Activated CD4-positive, alpha-beta T cell treated with anti-CD3 and anti-CD28 coated beads for 36 hours (primary cell): ENCODE measurements at regions of chr4 and their contacts with region 1.

Region 1: DNA sequence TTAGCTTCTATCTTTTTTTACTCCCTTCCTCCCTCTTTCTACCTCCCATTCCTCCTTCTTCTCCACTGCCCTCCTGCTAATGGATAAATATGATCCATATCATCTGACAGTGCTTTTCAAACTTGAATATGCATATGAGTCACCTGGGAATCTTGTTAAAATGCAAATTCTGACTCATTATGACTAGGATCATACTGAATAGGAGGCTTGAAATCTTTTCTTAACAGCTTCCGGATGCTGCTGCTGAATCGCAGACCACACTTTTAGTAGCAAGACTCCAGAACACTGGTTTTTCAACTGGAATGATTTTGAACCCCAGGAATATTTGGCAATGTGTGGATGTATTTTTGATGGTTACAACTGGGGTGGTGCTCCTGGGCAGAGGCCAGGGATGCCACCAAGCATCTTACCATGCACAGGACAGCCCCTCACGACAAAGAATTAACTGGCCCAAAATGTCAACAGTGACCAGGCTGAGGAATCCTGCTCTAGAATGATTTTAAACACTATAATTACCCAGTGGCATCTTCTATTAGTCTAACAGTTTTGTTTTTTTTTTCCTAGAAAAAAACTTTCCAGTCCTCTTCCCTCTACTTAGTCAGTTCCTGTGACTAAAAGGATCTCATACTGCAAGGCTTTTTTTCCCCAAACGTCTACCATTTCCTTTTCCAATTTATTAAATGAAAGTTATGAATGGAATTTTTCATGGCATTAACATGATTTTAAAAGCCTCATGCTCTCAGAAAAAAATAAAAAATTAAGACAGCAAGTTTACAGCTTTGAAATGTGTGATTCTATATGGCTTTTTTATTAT is 10.6 kb upstream of the PYURF start:
- DNase-seq: no peak
- ATAC-seq: no peak
- H3K4me3 Mint-ChIP-seq: no peak overlapping the region
- H3K27ac Mint-ChIP-seq: no peak overlapping the region
- H3K4me1 Mint-ChIP-seq: peaks cover 23% of the 10 kb centered on the region
- H3K27me3 Mint-ChIP-seq: no peaks in the 10 kb centered on the region

Region 2: GRCh38 chr4:88465653-88466192 is 68.4 kb before region 1 on chr4:
- CTCF ChIA-PET with region 1: no interaction called
- POLR2A ChIA-PET with region 1: no interaction called
- intact Hi-C with region 1: no loop called
- DNase-seq: no peak
- ATAC-seq: no peak
- H3K4me3 Mint-ChIP-seq: no peak overlapping the region
- H3K27ac Mint-ChIP-seq: no peak overlapping the region
- H3K4me1 Mint-ChIP-seq: peaks cover 16% of the 10 kb centered on the region
- H3K27me3 Mint-ChIP-seq: no peaks in the 10 kb centered on the region

Region 3: GRCh38 chr4:88659055-88659889 is 125.1 kb after region 1 on chr4:
- CTCF ChIA-PET with region 1: interaction called, 20 read pairs
- POLR2A ChIA-PET with region 1: no interaction called
- intact Hi-C with region 1: loop called (anchors 1 kb)
- DNase-seq: peak; percentile 54
- ATAC-seq: peak; percentile 81
- H3K4me3 Mint-ChIP-seq: no peak overlapping the region
- H3K27ac Mint-ChIP-seq: no peak overlapping the region
- H3K4me1 Mint-ChIP-seq: peaks cover 7% of the 10 kb centered on the region
- H3K27me3 Mint-ChIP-seq: no peaks in the 10 kb centered on the region

Region 4: GRCh38 chr4:88792268-88792781 is 258.2 kb after region 1 on chr4:
- CTCF ChIA-PET with region 1: interaction called, 4 read pairs
- POLR2A ChIA-PET with region 1: no interaction called
- intact Hi-C with region 1: loop called in 1 of 2 experiments (anchors 2 kb)
- DNase-seq: no peak
- ATAC-seq: peak; percentile 88
- H3K4me3 Mint-ChIP-seq: no peak overlapping the region
- H3K27ac Mint-ChIP-seq: no peak overlapping the region
- H3K4me1 Mint-ChIP-seq: peaks cover 18% of the 10 kb centered on the region
- H3K27me3 Mint-ChIP-seq: no peaks in the 10 kb centered on the region

Region 5: GRCh38 chr4:89024051-89024675 is 490.0 kb after region 1 on chr4:
- CTCF ChIA-PET with region 1: interaction called, 5 read pairs
- POLR2A ChIA-PET with region 1: no interaction called
- intact Hi-C with region 1: loop called in 1 of 2 experiments (anchors 1 kb)
- DNase-seq: peak; percentile 58
- ATAC-seq: peak; percentile 91
- H3K4me3 Mint-ChIP-seq: no peak overlapping the region
- H3K27ac Mint-ChIP-seq: no peak overlapping the region
- H3K4me1 Mint-ChIP-seq: peaks cover 4% of the 10 kb centered on the region
- H3K27me3 Mint-ChIP-seq: peaks cover 2% of the 10 kb centered on the region

Region 6: DNA sequence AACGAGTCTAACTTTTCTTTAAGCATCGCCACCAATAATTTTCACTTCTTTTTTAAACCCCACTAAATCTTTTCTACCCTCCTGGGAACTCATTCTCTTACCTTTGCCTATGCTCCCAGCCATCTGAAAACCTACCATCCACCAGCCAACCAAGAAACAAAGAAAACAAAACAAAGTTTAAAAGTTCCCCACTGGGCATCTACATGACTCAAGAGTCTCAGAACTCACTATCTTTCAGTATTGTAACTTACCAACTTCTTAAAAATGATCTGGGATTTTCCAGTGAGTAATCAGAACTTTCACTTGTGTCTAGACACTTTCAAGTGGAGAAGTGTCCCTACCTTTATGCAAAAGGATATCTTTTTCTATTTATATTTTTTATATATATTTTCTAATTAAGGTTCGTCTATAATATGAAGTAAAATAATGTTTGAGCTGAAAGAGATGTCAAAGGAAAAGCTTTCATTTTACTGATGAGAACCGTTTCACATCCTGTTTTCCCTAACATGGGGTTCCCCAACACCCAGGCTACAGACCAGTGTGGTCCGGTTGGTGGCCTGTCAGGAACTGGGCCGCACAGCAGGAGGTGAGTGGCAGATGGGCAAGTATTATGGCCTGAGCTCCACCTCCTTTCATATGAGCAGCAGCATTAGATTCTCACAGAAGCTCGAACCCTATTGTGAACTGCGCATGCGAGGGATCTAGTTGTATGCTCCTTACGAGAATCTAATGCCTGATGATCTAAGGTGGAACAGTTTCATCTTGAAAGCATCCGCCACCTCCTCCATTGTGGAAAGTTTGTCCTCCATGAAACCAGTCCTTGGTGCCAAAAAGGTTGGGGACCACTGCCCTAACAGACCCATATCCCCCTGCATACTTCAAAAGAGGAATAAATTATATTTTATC is 567.4 kb after region 1 on chr4:
- CTCF ChIA-PET with region 1: no interaction called
- POLR2A ChIA-PET with region 1: no interaction called
- intact Hi-C with region 1: loop called in 1 of 2 experiments (anchors 1 kb)
- DNase-seq: peak; percentile 16
- ATAC-seq: peak; percentile 90
- H3K4me3 Mint-ChIP-seq: no peak overlapping the region
- H3K27ac Mint-ChIP-seq: peak overlapping the region; percentile 44
- H3K4me1 Mint-ChIP-seq: peaks cover 21% of the 10 kb centered on the region
- H3K27me3 Mint-ChIP-seq: peaks cover 2% of the 10 kb centered on the region